A673 (cell line): ENCODE measurements at regions of chr14 and their contacts with region 1.

Region 1: DNA sequence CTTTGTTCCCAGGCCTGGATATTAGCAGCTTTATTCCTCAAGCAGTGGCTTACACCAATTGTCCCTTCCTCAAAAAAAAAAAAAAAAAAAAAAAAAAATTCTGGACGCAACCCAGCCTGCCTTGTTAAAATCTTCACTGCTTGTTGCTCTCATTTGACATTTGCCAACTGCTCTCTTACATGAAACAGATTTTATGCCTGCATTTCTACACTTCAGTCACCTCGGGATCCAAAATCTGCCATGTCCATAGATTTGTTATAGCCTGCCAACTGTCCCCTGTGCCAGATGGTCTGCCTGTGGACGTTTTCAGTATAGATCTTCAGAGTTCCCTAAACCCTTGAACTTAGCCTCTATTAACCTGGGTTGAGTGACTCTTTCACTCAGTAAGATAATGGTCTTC is 651.5 kb downstream of the FSCB start:
- DNase-seq: no peak
- H3K4me3 ChIP-seq: no peak overlapping the region
- H3K27ac ChIP-seq: no peak overlapping the region
- H3K4me1 ChIP-seq: no peaks in the 10 kb centered on the region
- H3K27me3 ChIP-seq: no peaks in the 10 kb centered on the region
- CTCF ChIP-seq: no peak

Region 2: DNA sequence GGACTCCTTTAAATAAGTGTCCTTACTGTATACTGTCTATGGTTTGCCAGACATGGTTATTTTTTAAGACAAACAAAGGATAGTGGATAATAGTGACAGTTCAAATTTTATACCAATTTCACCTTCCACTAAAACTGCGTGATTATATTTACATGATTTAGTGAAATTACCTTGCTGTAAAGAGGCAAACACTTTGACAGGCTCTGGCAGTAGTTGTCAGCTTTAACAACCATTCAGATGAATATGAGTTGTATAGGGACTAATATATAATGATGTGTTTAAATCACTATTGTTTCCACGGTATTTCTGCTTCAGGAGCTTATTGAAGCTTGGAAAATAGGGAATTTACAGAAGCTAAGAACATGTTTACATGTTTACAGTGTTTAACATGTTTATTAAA is 712.5 kb before region 1 on chr14:
- CTCF ChIA-PET with region 1: no interaction called
- POLR2A ChIA-PET with region 1: interaction called, 12 read pairs
- intact Hi-C with region 1: no loop called
- DNase-seq: no peak
- H3K4me3 ChIP-seq: no peak overlapping the region
- H3K27ac ChIP-seq: no peak overlapping the region
- H3K4me1 ChIP-seq: no peaks in the 10 kb centered on the region
- H3K27me3 ChIP-seq: no peaks in the 10 kb centered on the region
- CTCF ChIP-seq: no peak

Region 3: GRCh38 chr14:43677581-43677980 is 178.0 kb before region 1 on chr14:
- CTCF ChIA-PET with region 1: no interaction called
- POLR2A ChIA-PET with region 1: interaction called, 23 read pairs
- intact Hi-C with region 1: no loop called
- DNase-seq: no peak
- H3K4me3 ChIP-seq: no peak overlapping the region
- H3K27ac ChIP-seq: no peak overlapping the region
- H3K4me1 ChIP-seq: no peaks in the 10 kb centered on the region
- H3K27me3 ChIP-seq: no peaks in the 10 kb centered on the region
- CTCF ChIP-seq: no peak

Region 4: GRCh38 chr14:45070215-45070614 is 1214.7 kb after region 1 on chr14:
- CTCF ChIA-PET with region 1: no interaction called
- POLR2A ChIA-PET with region 1: no interaction called
- intact Hi-C with region 1: no loop called
- DNase-seq: no peak
- H3K4me3 ChIP-seq: no peak overlapping the region
- H3K27ac ChIP-seq: no peak overlapping the region
- H3K4me1 ChIP-seq: no peaks in the 10 kb centered on the region
- H3K27me3 ChIP-seq: no peaks in the 10 kb centered on the region
- CTCF ChIP-seq: no peak